CD8-positive, alpha-beta T cell (primary cell): ENCODE measurements at regions of chr6 and their contacts with region 1.

Region 1: DNA sequence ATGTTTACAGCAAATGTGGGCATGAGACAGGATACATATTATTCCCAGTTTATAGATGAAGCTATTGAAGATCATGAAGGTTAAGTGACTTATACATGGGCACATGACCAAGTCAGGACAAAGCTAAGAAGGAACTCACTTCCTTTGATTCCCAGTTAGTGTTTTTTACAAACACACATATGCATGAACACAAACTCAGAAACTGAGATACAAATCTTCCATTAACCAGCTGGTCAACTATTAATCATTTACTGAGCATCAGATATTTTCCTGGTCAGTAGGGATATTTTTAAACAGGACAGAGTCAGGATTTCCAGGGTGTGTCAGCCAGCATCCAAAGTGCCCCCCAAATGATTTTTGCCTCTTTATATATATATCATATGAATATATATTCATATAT is 222.2 kb downstream of the OGFRL1 start:
- DNase-seq: no peak
- ATAC-seq: no peak
- H3K4me3 ChIP-seq: no peak overlapping the region
- H3K4me3 Mint-ChIP-seq: no peak overlapping the region
- H3K27ac ChIP-seq: no peak overlapping the region
- H3K27ac Mint-ChIP-seq: no peak overlapping the region
- H3K4me1 ChIP-seq: no peaks in the 10 kb centered on the region
- H3K4me1 Mint-ChIP-seq: no peaks in the 10 kb centered on the region
- H3K27me3 ChIP-seq: no peaks in the 10 kb centered on the region
- H3K27me3 Mint-ChIP-seq: no peaks in the 10 kb centered on the region
- CTCF ChIP-seq: no peak

Region 2: GRCh38 chr6:71523548-71523947 is 12.7 kb after region 1 on chr6:
- CTCF ChIA-PET with region 1: no interaction called
- POLR2A ChIA-PET with region 1: interaction called, 3 read pairs
- intact Hi-C with region 1: loop called in 1 of 2 experiments (anchors 1 kb)
- DNase-seq: no peak
- ATAC-seq: no peak
- H3K4me3 ChIP-seq: no peak overlapping the region
- H3K4me3 Mint-ChIP-seq: no peak overlapping the region
- H3K27ac ChIP-seq: no peak overlapping the region
- H3K27ac Mint-ChIP-seq: no peak overlapping the region
- H3K4me1 ChIP-seq: no peaks in the 10 kb centered on the region
- H3K4me1 Mint-ChIP-seq: no peaks in the 10 kb centered on the region
- H3K27me3 ChIP-seq: peaks cover 0 to 3% of the 10 kb centered on the region in 2 experiments
- H3K27me3 Mint-ChIP-seq: peaks cover 2% of the 10 kb centered on the region
- CTCF ChIP-seq: no peak

Region 3: DNA sequence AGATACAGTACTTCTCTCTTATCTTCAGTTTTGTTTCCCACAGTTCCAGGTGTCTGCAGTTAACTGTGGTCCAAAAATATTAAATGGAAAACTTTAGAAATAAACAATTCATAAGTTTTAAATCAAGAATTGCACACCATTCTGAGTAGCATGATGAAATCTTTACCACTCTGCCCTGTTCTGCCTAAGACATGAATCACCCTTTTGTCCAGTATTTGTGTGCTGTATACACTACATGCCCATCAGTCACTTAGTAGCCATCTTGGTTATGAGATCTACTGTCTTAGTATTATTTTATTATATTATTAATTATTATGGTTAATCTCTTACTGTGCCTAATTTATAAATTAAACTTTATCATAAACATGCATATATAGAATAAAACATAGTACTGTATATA is 56.7 kb after region 1 on chr6:
- CTCF ChIA-PET with region 1: no interaction called
- POLR2A ChIA-PET with region 1: no interaction called
- intact Hi-C with region 1: no loop called
- DNase-seq: no peak
- ATAC-seq: no peak
- H3K4me3 ChIP-seq: no peak overlapping the region
- H3K4me3 Mint-ChIP-seq: no peak overlapping the region
- H3K27ac ChIP-seq: no peak overlapping the region
- H3K27ac Mint-ChIP-seq: no peak overlapping the region
- H3K4me1 ChIP-seq: no peaks in the 10 kb centered on the region
- H3K4me1 Mint-ChIP-seq: no peaks in the 10 kb centered on the region
- H3K27me3 ChIP-seq: no peaks in the 10 kb centered on the region
- H3K27me3 Mint-ChIP-seq: no peaks in the 10 kb centered on the region
- CTCF ChIP-seq: no peak